Psoas muscle (tissue), 8 donors: ENCODE measurements at regions of chr4 and their contacts with region 1.

Region 1: GRCh38 chr4:165464813-165465381 is 86.1 kb downstream of the CPE start:
- DNase-seq: no peak
- ATAC-seq: peak in 2 of 4 donors; percentile 41 to 72
- H3K4me3 ChIP-seq: no peak overlapping the region
- H3K27ac ChIP-seq: no peak overlapping the region
- H3K4me1 ChIP-seq: no peaks in the 10 kb centered on the region
- H3K27me3 ChIP-seq: no peaks in the 10 kb centered on the region
- CTCF ChIP-seq: peak; percentile 68

Region 2: GRCh38 chr4:165131247-165131832 is 333.6 kb before region 1 on chr4:
- intact Hi-C with region 1: loop called (anchors 1 to 5 kb)
- DNase-seq: no peak
- ATAC-seq: peak in 1 of 4 donors; percentile 73
- H3K4me3 ChIP-seq: no peak overlapping the region
- H3K27ac ChIP-seq: no peak overlapping the region
- H3K4me1 ChIP-seq: no peaks in the 10 kb centered on the region
- H3K27me3 ChIP-seq: no peaks in the 10 kb centered on the region
- CTCF ChIP-seq: peak; percentile 87

Region 3: GRCh38 chr4:165355900-165356300 is 109.0 kb before region 1 on chr4:
- intact Hi-C with region 1: loop called in 1 of 2 experiments (anchors 10 kb)
- DNase-seq: no peak
- ATAC-seq: no peak
- H3K4me3 ChIP-seq: no peak overlapping the region
- H3K27ac ChIP-seq: no peak overlapping the region
- H3K4me1 ChIP-seq: no peaks in the 10 kb centered on the region
- H3K27me3 ChIP-seq: peaks cover 0 to 3% (median 0%) of the 10 kb centered on the region in 3 donors
- CTCF ChIP-seq: peak; percentile 18

Region 4: GRCh38 chr4:165378745-165379677 is 85.9 kb before region 1 on chr4 and contains the start of gene CPE:
- intact Hi-C with region 1: no loop called
- DNase-seq: peak; percentile 81 to 82
- ATAC-seq: peak; percentile 71 to 98 (median 96)
- H3K4me3 ChIP-seq: peak within 1 kb of the TSS; percentile 55
- H3K27ac ChIP-seq: peak within 1 kb of the TSS; percentile 24
- H3K4me1 ChIP-seq: no peaks in the 10 kb centered on the region
- H3K27me3 ChIP-seq: peaks cover 0 to 34% (median 1%) of the 10 kb centered on the region in 3 donors
- CTCF ChIP-seq: peak; percentile 35
- total RNA-seq, gene CPE: 12.2 to 34.8 (median 22.4) TPM

Region 5: GRCh38 chr4:165425629-165426028 is 39.3 kb before region 1 on chr4:
- intact Hi-C with region 1: no loop called
- DNase-seq: no peak
- ATAC-seq: no peak
- H3K4me3 ChIP-seq: no peak overlapping the region
- H3K27ac ChIP-seq: no peak overlapping the region
- H3K4me1 ChIP-seq: no peaks in the 10 kb centered on the region
- H3K27me3 ChIP-seq: no peaks in the 10 kb centered on the region
- CTCF ChIP-seq: no peak

Region 6: GRCh38 chr4:165524532-165525190 is 59.8 kb after region 1 on chr4:
- intact Hi-C with region 1: no loop called
- DNase-seq: no peak
- ATAC-seq: no peak
- H3K4me3 ChIP-seq: no peak overlapping the region
- H3K27ac ChIP-seq: no peak overlapping the region
- H3K4me1 ChIP-seq: no peaks in the 10 kb centered on the region
- H3K27me3 ChIP-seq: no peaks in the 10 kb centered on the region
- CTCF ChIP-seq: no peak